ENCODE measurements at regions of chr19 and their contacts with region 1.

Region 1: DNA sequence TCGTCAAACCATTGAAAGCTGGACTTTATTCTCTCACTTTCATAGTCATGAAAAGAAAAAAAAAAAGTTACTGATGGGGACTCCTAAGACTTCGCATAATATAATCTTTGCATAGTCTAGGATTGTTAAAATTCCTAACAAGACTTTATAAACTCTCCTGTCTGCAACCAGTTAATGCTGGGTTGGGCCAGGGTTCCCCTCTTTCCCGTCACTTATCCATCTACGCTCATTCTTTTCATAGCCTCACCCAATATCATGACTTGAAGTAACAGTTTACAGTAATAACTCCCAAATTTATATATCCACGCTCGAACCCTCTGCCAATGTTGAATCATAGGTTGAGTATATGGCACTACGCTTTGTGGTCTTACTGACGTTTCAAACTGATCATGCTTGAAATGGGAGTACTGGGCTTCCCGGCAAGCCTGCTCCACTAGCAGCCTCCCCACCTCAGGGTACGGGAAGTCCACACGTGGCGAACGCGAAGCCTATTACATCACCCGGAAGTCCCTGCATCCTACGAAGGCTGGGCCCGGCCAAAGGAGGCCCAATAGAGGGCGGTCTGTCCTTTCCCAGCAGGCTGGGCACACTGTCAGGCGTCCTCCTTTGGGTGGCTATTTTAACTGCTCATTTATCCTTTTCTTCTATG is 743 bp upstream of the ZNF460 start:
- DNase-seq: peak; percentile 89
- ATAC-seq: peak; percentile 96
- H3K4me3 ChIP-seq: peak overlapping the region; percentile 68 to 100
- H3K27ac ChIP-seq: peak overlapping the region; percentile 99
- H3K4me1 ChIP-seq: peaks cover 23% of the 10 kb centered on the region
- H3K27me3 ChIP-seq: no peaks in the 10 kb centered on the region
- CTCF ChIP-seq: no peak; the same call in 1 of the 2 replicates

Region 2: DNA sequence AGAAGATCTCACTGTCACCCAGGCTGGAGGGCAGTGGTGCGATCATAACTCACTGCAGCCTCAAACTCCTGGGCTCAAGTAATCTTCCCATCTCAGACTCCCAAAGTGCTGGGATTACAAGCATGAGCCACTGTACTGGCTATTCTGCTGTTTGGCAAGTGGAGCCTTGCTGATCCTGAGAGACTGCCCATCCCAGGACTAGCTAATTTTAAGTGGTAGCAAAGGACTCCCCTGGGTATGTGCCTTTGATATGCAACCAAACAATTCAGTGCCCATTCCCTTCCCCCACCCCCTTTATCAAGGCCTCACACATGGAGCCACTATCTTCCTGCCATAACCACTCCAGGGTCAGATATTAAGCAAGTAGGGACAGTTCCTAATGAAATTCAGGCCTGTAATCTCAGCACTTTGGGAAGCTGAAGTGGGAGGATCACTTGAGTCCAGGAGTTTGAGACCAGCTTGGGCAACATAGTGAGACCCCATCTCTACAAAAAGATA is 16.2 kb before region 1 on chr19:
- CTCF ChIA-PET with region 1: no interaction called
- POLR2A ChIA-PET with region 1: interaction called, 22 read pairs
- in situ Hi-C with region 1: no loop called
- intact Hi-C with region 1: no loop called
- DNase-seq: no peak
- ATAC-seq: no peak
- H3K4me3 ChIP-seq: no peak overlapping the region
- H3K27ac ChIP-seq: no peak overlapping the region
- H3K4me1 ChIP-seq: no peaks in the 10 kb centered on the region
- H3K27me3 ChIP-seq: no peaks in the 10 kb centered on the region
- CTCF ChIP-seq: no peak

Measured in Panc1 (cell line).